ENCODE measurements at regions of chr1 and their contacts with region 1.

Region 1: DNA sequence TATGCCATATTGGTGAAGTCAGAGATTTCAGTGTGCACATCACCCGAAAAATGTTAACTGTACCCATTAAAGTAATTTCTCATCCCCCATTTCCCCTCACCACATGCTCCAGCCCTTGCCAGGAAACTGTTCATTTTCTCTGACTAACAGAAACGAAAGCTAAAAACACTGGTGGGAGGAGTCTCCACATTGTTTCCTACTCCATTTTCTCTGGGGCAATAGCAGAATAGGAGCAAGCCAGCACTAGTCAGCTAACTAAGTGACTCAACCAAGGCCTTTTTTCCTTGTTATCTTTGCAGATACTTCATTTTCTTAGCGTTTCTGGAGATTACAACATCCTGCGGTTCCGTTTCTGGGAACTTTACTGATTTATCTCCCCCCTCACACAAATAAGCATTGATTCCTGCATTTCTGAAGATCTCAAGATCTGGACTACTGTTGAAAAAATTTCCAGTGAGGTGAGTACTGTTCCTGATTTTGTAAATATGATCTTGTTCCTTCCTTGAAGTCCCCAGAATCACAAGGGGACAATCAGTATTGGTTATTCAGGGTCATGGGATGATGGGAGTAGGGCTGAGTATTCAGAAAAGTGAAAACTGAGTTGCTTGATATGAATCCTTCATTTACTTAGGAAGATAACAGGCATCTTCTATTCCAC is at the start of gene IFI16:
- DNase-seq: peak; percentile 85
- ATAC-seq: peak; percentile 66
- H3K4me3 Mint-ChIP-seq: peak within 1 kb of the TSS; percentile 88
- H3K27ac Mint-ChIP-seq: peak within 1 kb of the TSS; percentile 94
- H3K4me1 Mint-ChIP-seq: peaks cover 44% of the 10 kb centered on the region
- H3K27me3 Mint-ChIP-seq: no peaks in the 10 kb centered on the region
- total RNA-seq, gene IFI16: 308 to 314 TPM

Region 2: GRCh38 chr1:158931055-158931737 is 78.6 kb before region 1 on chr1 and contains the start of gene PYHIN1:
- CTCF ChIA-PET with region 1: no interaction called
- POLR2A ChIA-PET with region 1: interaction called, 17 read pairs
- DNase-seq: peak; percentile 50
- ATAC-seq: peak; percentile 79
- H3K4me3 Mint-ChIP-seq: peak within 1 kb of the TSS; percentile 81
- H3K27ac Mint-ChIP-seq: peak within 1 kb of the TSS; percentile 84
- H3K4me1 Mint-ChIP-seq: peaks cover 18% of the 10 kb centered on the region
- H3K27me3 Mint-ChIP-seq: no peaks in the 10 kb centered on the region
- total RNA-seq, gene PYHIN1: 11.5 to 12.5 TPM

Region 3: DNA sequence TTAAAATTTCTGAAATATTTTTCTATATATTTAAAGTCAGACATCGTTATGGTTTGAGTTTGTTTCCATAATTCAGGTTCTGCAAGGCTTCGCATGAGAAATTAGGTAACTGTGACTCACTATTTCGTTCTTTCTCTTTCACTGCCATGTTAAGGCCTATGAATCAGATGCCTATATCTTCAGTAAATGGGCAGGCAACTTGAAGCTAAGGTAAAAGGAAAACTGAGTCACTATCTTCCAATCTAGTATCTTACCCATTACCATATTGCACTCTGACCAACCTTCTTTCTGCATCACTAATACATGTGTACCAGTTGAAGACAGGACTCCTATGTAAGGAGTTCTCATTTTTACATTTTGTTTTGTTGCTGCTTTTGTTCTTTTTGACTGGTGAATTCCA is 40.7 kb before region 1 on chr1:
- CTCF ChIA-PET with region 1: no interaction called
- POLR2A ChIA-PET with region 1: no interaction called
- DNase-seq: no peak
- ATAC-seq: no peak
- H3K4me3 Mint-ChIP-seq: no peak overlapping the region
- H3K27ac Mint-ChIP-seq: no peak overlapping the region
- H3K4me1 Mint-ChIP-seq: no peaks in the 10 kb centered on the region
- H3K27me3 Mint-ChIP-seq: peaks cover 9% of the 10 kb centered on the region

Region 4: DNA sequence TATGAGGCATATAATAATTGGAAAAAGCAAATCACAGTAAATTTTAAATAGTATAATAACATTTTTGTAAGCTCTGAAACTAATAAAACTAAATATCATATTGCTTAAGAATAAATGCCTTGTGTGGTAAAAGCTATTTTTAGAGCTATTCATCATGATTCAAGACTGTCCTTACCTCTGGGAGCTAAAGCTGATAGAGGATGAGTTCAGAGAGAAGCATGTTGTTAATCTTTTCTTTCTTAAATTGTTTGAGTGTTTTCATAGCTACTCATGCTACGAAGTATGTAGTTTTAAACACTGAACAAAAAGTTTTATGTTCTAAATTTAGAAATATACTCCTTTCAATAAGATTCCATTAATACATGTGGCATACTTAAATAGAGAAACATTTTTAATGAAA is 30.4 kb after region 1 on chr1:
- CTCF ChIA-PET with region 1: no interaction called
- POLR2A ChIA-PET with region 1: interaction called, 10 read pairs
- DNase-seq: no peak
- ATAC-seq: no peak
- H3K4me3 Mint-ChIP-seq: no peak overlapping the region
- H3K27ac Mint-ChIP-seq: no peak overlapping the region
- H3K4me1 Mint-ChIP-seq: peaks cover 28% of the 10 kb centered on the region
- H3K27me3 Mint-ChIP-seq: no peaks in the 10 kb centered on the region

Region 5: DNA sequence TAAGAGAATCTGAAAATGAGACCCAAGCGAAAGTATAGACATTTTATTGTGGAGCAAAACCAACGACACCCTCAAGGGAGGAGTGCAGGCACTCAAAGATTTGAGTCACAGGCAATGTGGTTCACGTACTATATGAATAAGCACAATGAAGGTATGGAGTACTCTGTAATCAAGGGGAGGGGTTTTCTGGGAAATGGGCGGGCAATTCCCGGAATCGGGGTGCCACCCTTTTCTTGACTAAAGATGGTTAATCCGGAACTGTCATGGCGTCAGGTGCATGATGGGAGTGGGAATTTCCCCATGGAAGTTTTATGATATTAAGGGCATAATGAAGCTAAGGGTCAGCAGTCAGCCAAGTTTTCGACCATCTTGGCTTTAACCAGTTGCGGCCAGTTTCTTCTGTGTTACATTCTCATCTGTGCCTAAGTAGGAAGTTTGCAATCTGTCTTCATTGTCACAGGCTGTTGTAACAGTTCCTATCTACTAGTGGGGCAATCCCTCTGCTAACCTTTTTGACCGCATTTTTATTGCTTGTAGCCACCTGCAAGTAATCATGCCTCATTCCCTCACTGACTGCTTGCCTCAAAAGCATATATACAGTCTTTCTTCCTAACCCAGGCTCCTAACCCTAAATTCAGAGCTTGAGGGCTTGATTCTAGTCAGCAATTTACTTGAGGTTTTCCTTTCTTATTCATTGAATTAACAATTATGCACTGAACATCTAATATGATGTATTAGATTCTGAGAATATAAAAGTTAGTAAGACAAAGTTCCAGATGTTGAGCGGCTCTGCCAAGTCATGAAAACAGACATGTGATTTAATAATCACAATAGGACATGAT is 67.5 kb after region 1 on chr1:
- CTCF ChIA-PET with region 1: interaction called, 20 read pairs
- POLR2A ChIA-PET with region 1: interaction called, 84 read pairs
- DNase-seq: peak; percentile 94
- ATAC-seq: peak; percentile 90
- H3K4me3 Mint-ChIP-seq: peak overlapping the region; percentile 75
- H3K27ac Mint-ChIP-seq: peak overlapping the region; percentile 97
- H3K4me1 Mint-ChIP-seq: peaks cover 21% of the 10 kb centered on the region
- H3K27me3 Mint-ChIP-seq: peaks cover 11% of the 10 kb centered on the region

Measured in activated CD8-positive, alpha-beta T cell treated with anti-CD3 and anti-CD28 coated beads, Interleukin-2, amount 10 ng/mL, durations not matched to agents 7 days and 5 days (primary cell).